Mammary epithelial cell (primary cell): ENCODE measurements at regions of chr3 and their contacts with region 1.

Region 1: GRCh38 chr3:112734718-112735350 is 93.9 kb upstream of the CCDC80 start:
- DNase-seq: peak; percentile 64
- H3K4me3 ChIP-seq: no peak overlapping the region
- H3K27ac ChIP-seq: peak overlapping the region; percentile 12
- H3K4me1 ChIP-seq: peaks cover 32% of the 10 kb centered on the region
- H3K27me3 ChIP-seq: no peaks in the 10 kb centered on the region
- CTCF ChIP-seq: peak; percentile 67 to 81

Region 2: GRCh38 chr3:112653209-112653871 is 81.5 kb before region 1 on chr3:
- CTCF ChIA-PET with region 1: no interaction called
- dilution Hi-C with region 1: no loop called
- in situ Hi-C with region 1: no loop called
- intact Hi-C with region 1: loop called (anchors 2 kb)
- DNase-seq: peak; percentile 90
- H3K4me3 ChIP-seq: no peak overlapping the region
- H3K27ac ChIP-seq: peak overlapping the region; percentile 96
- H3K4me1 ChIP-seq: peaks cover 53% of the 10 kb centered on the region
- H3K27me3 ChIP-seq: no peaks in the 10 kb centered on the region
- CTCF ChIP-seq: no peak

Region 3: DNA sequence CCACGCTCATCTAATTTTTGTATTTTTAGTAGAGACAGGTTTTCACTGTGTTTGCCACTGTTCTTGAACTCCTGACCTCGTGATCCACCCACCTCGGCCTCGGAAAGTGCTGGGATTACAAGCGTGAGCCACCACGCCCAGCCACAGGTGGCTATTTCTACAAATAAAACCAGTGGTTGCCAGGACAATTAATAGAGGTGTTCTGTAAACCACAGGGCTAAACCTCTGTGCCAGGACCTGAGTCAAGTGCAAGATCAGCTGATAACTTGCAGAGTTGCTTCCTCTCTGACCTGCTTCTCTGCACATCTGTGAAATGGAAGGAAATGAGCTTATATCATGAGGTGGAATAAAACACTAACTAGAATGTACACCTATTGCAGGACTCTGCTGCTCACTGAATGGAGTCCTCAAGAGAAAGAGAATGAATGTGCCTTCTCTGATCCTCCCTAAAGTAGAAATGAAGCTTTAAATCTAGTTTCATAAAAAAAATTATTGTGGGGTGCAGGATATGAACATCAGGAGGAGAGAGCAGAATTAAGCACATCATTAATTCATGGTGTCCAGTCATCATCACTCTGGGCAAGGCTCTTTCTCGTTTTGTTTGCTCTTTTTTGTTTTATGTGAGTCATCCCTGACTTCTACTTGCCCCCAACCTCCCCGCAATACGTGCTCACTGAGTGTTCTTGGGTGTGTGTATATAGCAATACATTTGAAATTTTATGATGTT is 39.2 kb after region 1 on chr3:
- CTCF ChIA-PET with region 1: interaction called, 8 read pairs
- dilution Hi-C with region 1: no loop called
- in situ Hi-C with region 1: no loop called
- intact Hi-C with region 1: loop called (anchors 1 kb)
- DNase-seq: peak; percentile 97
- H3K4me3 ChIP-seq: no peak overlapping the region
- H3K27ac ChIP-seq: peak overlapping the region; percentile 95
- H3K4me1 ChIP-seq: peaks cover 65% of the 10 kb centered on the region
- H3K27me3 ChIP-seq: no peaks in the 10 kb centered on the region
- CTCF ChIP-seq: no peak

Region 4: GRCh38 chr3:112979240-112979832 is 244.5 kb after region 1 on chr3:
- CTCF ChIA-PET with region 1: interaction called, 12 read pairs
- dilution Hi-C with region 1: loop called (anchors 25 kb)
- in situ Hi-C with region 1: loop called (anchors 10 kb)
- intact Hi-C with region 1: loop called (anchors 1 kb)
- DNase-seq: peak; percentile 5
- H3K4me3 ChIP-seq: no peak overlapping the region
- H3K27ac ChIP-seq: no peak overlapping the region
- H3K4me1 ChIP-seq: no peaks in the 10 kb centered on the region
- H3K27me3 ChIP-seq: no peaks in the 10 kb centered on the region
- CTCF ChIP-seq: peak; percentile 56 to 58

Region 5: GRCh38 chr3:112990672-112991602 is 256.1 kb after region 1 on chr3 and contains the start of gene GTPBP8:
- CTCF ChIA-PET with region 1: no interaction called
- dilution Hi-C with region 1: loop called (anchors 25 kb)
- in situ Hi-C with region 1: loop called (anchors 10 kb)
- intact Hi-C with region 1: loop called (anchors 5 kb)
- DNase-seq: peak; percentile 91
- H3K4me3 ChIP-seq: peak within 1 kb of the TSS; percentile 70 to 84 (median 77)
- H3K27ac ChIP-seq: peak within 1 kb of the TSS; percentile 98
- H3K4me1 ChIP-seq: peaks cover 15% of the 10 kb centered on the region
- H3K27me3 ChIP-seq: no peaks in the 10 kb centered on the region
- CTCF ChIP-seq: peak in 1 of 2 donors; percentile 5
- total RNA-seq, gene GTPBP8: 18.0 to 31.8 TPM